K562 (cell line): ENCODE measurements at regions of chr4 and their contacts with region 1.

Region 1: GRCh38 chr4:102620697-102621497 is 119.7 kb downstream of the NFKB1 start:
- DNase-seq: peak; percentile 52 to 81 (median 64)
- ATAC-seq: peak; percentile 95
- H3K4me3 ChIP-seq: no peak overlapping the region
- H3K27ac ChIP-seq: no peak overlapping the region
- H3K4me1 ChIP-seq: no peaks in the 10 kb centered on the region
- H3K27me3 ChIP-seq: no peaks in the 10 kb centered on the region
- CTCF ChIP-seq: peak; percentile 71 to 94 (median 88)
- EP300 ChIP-seq: peak; percentile 18; the same call in 1 of the 2 replicates
- POLR2A ChIP-seq: no peak
- RAD21 ChIP-seq: peak; percentile 94 to 95

Region 2: DNA sequence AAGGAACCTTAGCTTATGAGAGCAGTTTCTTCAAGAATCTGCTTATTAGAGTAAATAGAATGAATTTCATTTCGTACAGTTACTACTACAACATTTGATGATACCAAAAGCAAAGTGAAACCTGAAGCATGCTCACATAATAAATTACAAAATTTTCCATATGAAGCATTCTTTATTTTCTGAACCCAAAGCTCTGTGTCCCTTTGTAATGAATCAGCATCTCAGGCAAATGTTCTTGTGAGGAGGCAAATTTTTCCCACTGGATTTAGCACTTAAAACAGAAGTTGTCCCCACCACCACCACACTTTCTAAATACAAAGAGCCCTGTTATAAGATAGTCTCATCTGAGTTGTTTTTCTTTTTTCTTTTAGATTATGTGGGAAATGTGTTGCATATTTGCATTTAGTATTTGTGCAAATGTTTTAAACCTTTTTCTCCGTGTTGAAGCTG is 190.4 kb before region 1 on chr4:
- CTCF ChIA-PET with region 1: interaction called, 8 read pairs
- POLR2A ChIA-PET with region 1: no interaction called
- in situ Hi-C with region 1: no loop called
- intact Hi-C with region 1: loop called (anchors 5 kb)
- DNase-seq: peak in 2 of 4 experiments; percentile 10 to 25
- ATAC-seq: peak; percentile 56
- H3K4me3 ChIP-seq: peak overlapping the region; percentile 49
- H3K27ac ChIP-seq: peak overlapping the region; percentile 71; the same call in 2 of the 3 replicates
- H3K4me1 ChIP-seq: no peaks in the 10 kb centered on the region; a peak in 1 of 5 replicates
- H3K27me3 ChIP-seq: no peaks in the 10 kb centered on the region
- CTCF ChIP-seq: no peak
- EP300 ChIP-seq: no peak
- POLR2A ChIP-seq: no peak
- RAD21 ChIP-seq: no peak

Region 3: DNA sequence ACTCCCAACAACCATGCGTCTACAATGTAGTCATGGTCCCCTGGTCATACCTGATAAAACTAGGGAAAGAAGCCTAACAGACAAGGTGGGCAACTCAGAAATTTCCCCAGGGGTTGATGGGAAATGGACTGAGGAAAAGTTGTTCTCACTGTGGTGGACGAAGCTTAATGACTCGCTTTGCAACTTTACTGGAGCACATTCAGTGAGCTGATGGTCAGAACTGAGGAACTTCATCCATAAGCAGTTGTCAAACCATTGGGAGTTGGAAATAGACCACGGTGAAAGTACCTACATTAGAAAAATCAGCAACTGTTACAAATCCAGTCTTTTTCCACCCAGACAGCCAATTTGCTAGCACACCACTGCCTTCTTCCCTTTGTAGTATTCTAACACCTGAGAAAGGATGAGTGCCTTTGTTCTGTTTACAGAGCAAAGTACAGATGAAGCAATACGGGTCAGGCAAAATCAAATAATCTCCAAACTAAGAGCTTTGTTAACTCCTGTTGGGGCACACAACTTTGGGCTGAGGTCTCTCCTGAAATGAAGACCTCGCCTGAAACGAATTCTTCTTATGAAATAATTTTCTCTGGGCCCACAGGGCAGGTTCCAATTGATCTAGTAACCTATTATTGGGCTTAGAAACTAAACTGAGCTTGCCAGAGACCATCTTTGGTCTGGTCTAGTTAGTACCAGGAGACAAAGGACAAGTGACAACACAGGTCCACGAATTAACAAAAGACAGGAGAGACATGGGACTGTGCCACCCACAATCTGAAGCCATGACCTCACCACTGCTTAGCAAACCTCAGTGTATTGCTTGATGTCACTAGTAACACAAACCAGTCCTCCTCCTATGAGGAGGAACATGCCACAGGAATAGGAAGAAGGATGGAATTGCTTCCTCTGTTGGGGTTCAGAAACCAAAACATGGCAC is 178.7 kb before region 1 on chr4:
- CTCF ChIA-PET with region 1: no interaction called
- POLR2A ChIA-PET with region 1: no interaction called
- in situ Hi-C with region 1: no loop called
- intact Hi-C with region 1: no loop called
- DNase-seq: no peak
- ATAC-seq: no peak
- H3K4me3 ChIP-seq: no peak overlapping the region
- H3K27ac ChIP-seq: no peak overlapping the region
- H3K4me1 ChIP-seq: peaks cover 0 to 21% of the 10 kb centered on the region in 2 experiments; a peak in 2 of 5 replicates
- H3K27me3 ChIP-seq: no peaks in the 10 kb centered on the region; a peak in 1 of 5 replicates
- CTCF ChIP-seq: no peak
- EP300 ChIP-seq: no peak
- POLR2A ChIP-seq: no peak
- RAD21 ChIP-seq: no peak

Region 4: DNA sequence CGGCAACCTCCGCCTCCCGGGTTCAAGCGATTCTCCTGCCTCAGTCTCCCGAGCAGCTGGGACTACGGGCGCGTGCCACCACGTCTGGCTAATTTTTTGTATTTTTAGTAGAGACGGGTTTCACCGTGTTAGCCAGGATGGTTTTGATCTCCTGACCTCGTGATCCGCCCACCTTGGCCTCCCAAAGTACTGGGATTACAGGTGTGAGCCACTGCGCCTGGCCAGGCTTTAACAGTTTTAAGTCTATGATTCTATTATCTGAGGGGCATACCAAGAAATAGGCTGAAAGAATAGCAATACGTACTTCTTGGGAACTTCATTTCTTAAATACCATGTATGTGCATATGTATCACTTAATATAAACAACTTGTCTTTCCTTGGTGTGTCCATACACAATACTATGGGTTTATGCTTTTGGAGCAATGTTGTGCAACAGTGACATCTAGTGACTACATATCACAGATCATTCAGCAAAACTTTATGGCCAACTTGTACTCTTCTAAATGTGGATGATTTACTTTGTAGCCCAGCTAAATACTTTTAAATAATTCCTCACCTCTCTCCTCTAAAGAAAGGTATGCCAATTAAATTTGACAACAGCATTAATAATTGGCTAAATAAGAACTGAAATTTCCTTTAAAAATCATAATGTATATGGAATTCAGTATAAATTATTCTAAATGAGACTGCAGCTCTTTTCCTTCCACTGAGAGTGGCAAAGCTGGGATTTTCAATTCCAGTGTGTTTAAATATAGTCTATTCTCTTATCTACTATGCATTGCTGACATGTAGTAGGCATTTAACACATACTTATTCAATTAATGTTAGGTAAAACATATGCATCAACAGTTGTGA is 388.2 kb after region 1 on chr4:
- CTCF ChIA-PET with region 1: interaction called, 21 read pairs
- POLR2A ChIA-PET with region 1: no interaction called
- in situ Hi-C with region 1: loop called (anchors 5 kb)
- intact Hi-C with region 1: loop called (anchors 1 kb)
- DNase-seq: peak; percentile 23 to 78 (median 38)
- ATAC-seq: peak; percentile 93
- H3K4me3 ChIP-seq: no peak overlapping the region
- H3K27ac ChIP-seq: no peak overlapping the region
- H3K4me1 ChIP-seq: peaks cover 9 to 18% of the 10 kb centered on the region in 2 experiments; a peak in 4 of 5 replicates
- H3K27me3 ChIP-seq: no peaks in the 10 kb centered on the region
- CTCF ChIP-seq: peak; percentile 59 to 91 (median 68); a peak in 5 of 6 replicates
- EP300 ChIP-seq: no peak
- POLR2A ChIP-seq: no peak
- RAD21 ChIP-seq: peak; percentile 94 to 97

Region 5: GRCh38 chr4:103099691-103100392 is 478.9 kb after region 1 on chr4 and contains the start of gene BDH2:
- CTCF ChIA-PET with region 1: interaction called, 8 read pairs
- POLR2A ChIA-PET with region 1: no interaction called
- in situ Hi-C with region 1: no loop called
- intact Hi-C with region 1: loop called (anchors 2 kb)
- DNase-seq: peak; percentile 69 to 84 (median 76)
- ATAC-seq: peak; percentile 94
- H3K4me3 ChIP-seq: peak within 1 kb of the TSS; percentile 27
- H3K27ac ChIP-seq: no peak within 1 kb of the TSS
- H3K4me1 ChIP-seq: no peaks in the 10 kb centered on the region
- H3K27me3 ChIP-seq: no peaks in the 10 kb centered on the region
- CTCF ChIP-seq: peak; percentile 55 to 89 (median 68); a peak in 5 of 6 replicates
- EP300 ChIP-seq: no peak
- POLR2A ChIP-seq: no peak
- RAD21 ChIP-seq: peak; percentile 74 to 78
- polyA plus RNA-seq, gene BDH2: 9.9 to 10.7 TPM